IMR-90 (cell line): ENCODE measurements at regions of chr11 and their contacts with region 1.

Region 1: GRCh38 chr11:130737866-130738431 is 178.3 kb downstream of the SNX19 start:
- DNase-seq: peak; percentile 89
- ATAC-seq: peak; percentile 90
- H3K4me3 ChIP-seq: peak overlapping the region; percentile 0; the same call in 1 of the 2 replicates
- H3K27ac ChIP-seq: peak overlapping the region; percentile 93
- H3K4me1 ChIP-seq: peaks cover 15% of the 10 kb centered on the region
- H3K27me3 ChIP-seq: no peaks in the 10 kb centered on the region
- CTCF ChIP-seq: no peak
- POLR2A ChIP-seq: no peak
- RAD21 ChIP-seq: no peak; the same call in none of the 2 replicates

Region 2: GRCh38 chr11:130645164-130645842 is 92.6 kb before region 1 on chr11:
- CTCF ChIA-PET with region 1: no interaction called
- POLR2A ChIA-PET with region 1: no interaction called
- dilution Hi-C with region 1: no loop called
- in situ Hi-C with region 1: no loop called
- intact Hi-C with region 1: loop called (anchors 5 kb)
- DNase-seq: no peak
- ATAC-seq: no peak
- H3K4me3 ChIP-seq: no peak overlapping the region
- H3K27ac ChIP-seq: peak overlapping the region; percentile 79; the same call in 1 of the 2 replicates
- H3K4me1 ChIP-seq: peaks cover 20% of the 10 kb centered on the region; the same call in 1 of the 2 replicates
- H3K27me3 ChIP-seq: no peaks in the 10 kb centered on the region
- CTCF ChIP-seq: no peak
- POLR2A ChIP-seq: no peak
- RAD21 ChIP-seq: no peak

Region 3: GRCh38 chr11:130787092-130787616 is 49.2 kb after region 1 on chr11:
- CTCF ChIA-PET with region 1: no interaction called
- POLR2A ChIA-PET with region 1: no interaction called
- dilution Hi-C with region 1: no loop called
- in situ Hi-C with region 1: no loop called
- intact Hi-C with region 1: no loop called
- DNase-seq: peak; percentile 46
- ATAC-seq: peak; percentile 41
- H3K4me3 ChIP-seq: no peak overlapping the region
- H3K27ac ChIP-seq: peak overlapping the region; percentile 84; the same call in 1 of the 2 replicates
- H3K4me1 ChIP-seq: peaks cover 20% of the 10 kb centered on the region
- H3K27me3 ChIP-seq: peaks cover 2% of the 10 kb centered on the region; the same call in 1 of the 2 replicates
- CTCF ChIP-seq: no peak
- POLR2A ChIP-seq: no peak
- RAD21 ChIP-seq: no peak

Region 4: GRCh38 chr11:130854483-130854882 is 116.5 kb after region 1 on chr11:
- CTCF ChIA-PET with region 1: no interaction called
- POLR2A ChIA-PET with region 1: no interaction called
- dilution Hi-C with region 1: no loop called
- in situ Hi-C with region 1: no loop called
- intact Hi-C with region 1: no loop called
- DNase-seq: no peak
- ATAC-seq: no peak
- H3K4me3 ChIP-seq: no peak overlapping the region
- H3K27ac ChIP-seq: no peak overlapping the region
- H3K4me1 ChIP-seq: peaks cover 10% of the 10 kb centered on the region
- H3K27me3 ChIP-seq: no peaks in the 10 kb centered on the region; the same call in 1 of the 2 replicates
- CTCF ChIP-seq: no peak
- POLR2A ChIP-seq: no peak
- RAD21 ChIP-seq: no peak